SK-N-SH (cell line): ENCODE measurements at regions of chr3 and their contacts with region 1.

Region 1: DNA sequence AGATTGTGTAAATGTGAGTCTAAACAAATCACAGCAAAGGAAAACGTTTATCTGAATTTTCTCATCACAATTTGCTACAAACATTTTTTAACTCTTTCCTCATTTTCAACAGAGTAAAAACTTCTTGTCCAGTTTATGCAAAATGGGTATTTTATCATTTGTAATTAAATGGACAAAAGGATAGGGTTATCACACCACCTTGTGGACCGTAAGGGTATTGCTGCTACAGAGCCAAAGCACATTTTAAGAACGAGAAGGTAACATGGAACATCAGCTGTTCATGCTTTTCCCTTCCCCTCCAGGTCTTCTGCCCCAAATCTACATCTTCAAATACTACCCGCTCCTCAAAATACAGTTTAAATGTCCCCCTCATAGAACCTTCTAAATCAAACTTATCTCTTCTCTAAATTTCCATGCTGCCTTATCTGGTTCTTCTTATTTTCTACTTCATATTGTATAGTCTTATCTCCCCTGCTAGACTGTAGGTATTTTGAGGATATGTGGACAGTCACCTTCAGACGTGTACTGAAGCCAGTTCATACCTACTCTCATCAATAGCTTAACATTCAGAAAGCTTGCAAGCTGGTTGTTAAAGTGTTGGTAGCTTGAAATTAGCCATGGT is 12.8 kb upstream of the SETMAR start:
- DNase-seq: peak; percentile 32
- H3K4me3 ChIP-seq: peak overlapping the region in 1 of 2 experiments; percentile 42; a peak in 1 of 4 replicates
- H3K27ac ChIP-seq: no peak overlapping the region
- H3K4me1 ChIP-seq: no peaks in the 10 kb centered on the region; a peak in 1 of 4 replicates
- H3K27me3 ChIP-seq: no peaks in the 10 kb centered on the region; the same call in 1 of the 2 replicates
- CTCF ChIP-seq: peak; percentile 91
- EP300 ChIP-seq: no peak
- RAD21 ChIP-seq: peak; percentile 86

Region 2: GRCh38 chr3:4071472-4072184 is 218.8 kb before region 1 on chr3:
- CTCF ChIA-PET with region 1: no interaction called
- POLR2A ChIA-PET with region 1: no interaction called
- DNase-seq: no peak
- H3K4me3 ChIP-seq: no peak overlapping the region
- H3K27ac ChIP-seq: no peak overlapping the region
- H3K4me1 ChIP-seq: no peaks in the 10 kb centered on the region
- H3K27me3 ChIP-seq: no peaks in the 10 kb centered on the region
- CTCF ChIP-seq: no peak
- EP300 ChIP-seq: no peak
- RAD21 ChIP-seq: no peak

Region 3: DNA sequence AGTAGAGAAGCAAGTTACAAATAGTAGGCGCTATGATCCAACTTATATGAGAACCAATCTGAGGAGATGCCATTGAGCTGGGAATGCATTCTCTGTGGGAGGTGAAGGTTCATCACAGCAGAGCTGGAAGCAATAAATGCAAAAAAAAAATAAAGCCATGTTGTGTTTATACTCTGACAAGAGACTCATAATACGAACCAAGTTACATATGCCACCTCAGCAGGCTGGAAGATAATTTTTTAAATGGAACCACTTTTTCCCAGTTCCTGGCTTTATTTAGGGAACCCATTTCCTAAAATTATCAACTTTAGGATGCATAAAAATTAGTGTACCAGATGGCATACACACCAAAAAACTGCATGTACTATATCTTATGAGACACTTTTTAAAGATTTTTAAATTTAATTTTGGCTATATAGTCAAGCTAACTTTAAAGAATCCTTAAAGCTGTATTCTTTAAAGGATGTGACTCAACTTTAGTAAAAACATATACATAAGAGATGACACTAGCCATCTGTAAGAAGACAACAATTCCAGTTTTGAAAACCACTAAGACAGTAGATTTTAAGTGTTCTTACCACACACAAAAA is 10.8 kb before region 1 on chr3:
- CTCF ChIA-PET with region 1: interaction called, 21 read pairs
- POLR2A ChIA-PET with region 1: no interaction called
- DNase-seq: no peak
- H3K4me3 ChIP-seq: no peak overlapping the region
- H3K27ac ChIP-seq: no peak overlapping the region
- H3K4me1 ChIP-seq: no peaks in the 10 kb centered on the region
- H3K27me3 ChIP-seq: no peaks in the 10 kb centered on the region
- CTCF ChIP-seq: no peak
- EP300 ChIP-seq: no peak
- RAD21 ChIP-seq: no peak

Region 4: DNA sequence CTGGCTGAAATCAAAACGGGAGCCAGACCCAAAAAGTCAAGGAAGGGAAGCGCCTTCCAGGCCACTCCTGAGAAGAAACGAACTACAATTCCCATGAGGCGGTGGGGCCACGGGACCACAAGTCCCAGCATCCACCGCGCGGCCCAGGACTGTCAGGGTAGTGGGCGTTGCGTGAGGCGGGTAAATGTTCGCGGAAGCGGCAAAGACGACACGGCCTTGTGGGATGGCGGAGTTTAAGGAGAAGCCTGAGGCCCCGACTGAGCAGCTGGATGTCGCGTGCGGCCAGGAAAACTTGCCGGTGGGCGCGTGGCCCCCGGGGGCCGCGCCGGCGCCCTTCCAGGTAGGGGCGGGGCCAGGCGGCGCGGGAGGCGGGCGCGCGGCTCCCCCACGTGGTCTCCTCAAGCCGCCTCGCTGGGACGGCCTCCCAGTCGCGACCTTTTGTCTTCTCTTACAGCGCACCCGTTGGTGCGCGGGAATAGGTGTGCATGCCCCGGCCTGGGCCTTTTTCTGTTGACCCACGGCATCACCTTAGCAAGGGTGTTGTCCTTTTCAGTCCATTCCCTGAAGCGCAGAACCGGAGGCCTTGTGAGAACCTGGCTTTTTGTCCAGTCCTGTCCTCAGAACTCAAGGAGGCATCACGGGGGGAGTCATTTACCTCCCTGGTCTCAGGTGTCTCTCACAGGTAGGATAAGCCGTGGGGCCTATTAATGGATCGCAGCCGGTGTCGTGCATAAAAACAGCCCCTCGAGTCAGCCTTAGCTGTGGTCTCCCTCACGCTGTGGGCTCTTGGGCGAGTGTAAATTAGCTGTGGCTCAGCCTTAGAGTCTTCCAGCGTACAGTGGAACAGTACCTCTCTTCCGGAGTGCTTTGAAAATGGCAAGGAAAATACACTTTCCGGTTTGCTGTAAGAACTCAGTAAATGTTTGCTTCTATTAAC is 13.1 kb after region 1 on chr3 and contains the start of gene SETMAR:
- CTCF ChIA-PET with region 1: interaction called, 15 read pairs
- POLR2A ChIA-PET with region 1: no interaction called
- DNase-seq: peak; percentile 92
- H3K4me3 ChIP-seq: peak within 1 kb of the TSS; percentile 63 to 87
- H3K27ac ChIP-seq: peak within 1 kb of the TSS; percentile 62 to 93
- H3K4me1 ChIP-seq: peaks cover 0 to 7% of the 10 kb centered on the region in 2 experiments; a peak in 2 of 4 replicates
- H3K27me3 ChIP-seq: no peaks in the 10 kb centered on the region
- CTCF ChIP-seq: no peak
- EP300 ChIP-seq: no peak
- RAD21 ChIP-seq: no peak
- polyA plus RNA-seq, gene SETMAR: 10.6 and 13.3 TPM in 2 replicates

Region 5: DNA sequence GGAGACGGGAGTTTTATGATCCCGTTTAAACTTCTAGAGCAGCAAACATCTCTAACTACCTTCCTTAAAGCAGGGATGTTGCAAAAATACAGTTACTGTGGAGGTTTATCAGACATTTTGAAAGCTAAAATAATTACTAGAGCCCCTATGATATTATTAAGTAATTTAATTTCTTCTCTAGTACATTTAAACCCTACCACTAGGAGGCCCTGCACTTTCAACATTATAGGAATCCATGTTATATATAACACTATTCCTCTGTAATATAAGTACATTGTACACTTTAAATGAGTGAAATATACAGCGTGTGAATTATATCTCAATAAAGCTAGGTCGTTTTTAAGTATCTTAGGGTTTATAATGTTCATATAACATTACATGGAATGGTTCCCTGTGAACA is 24.3 kb after region 1 on chr3:
- CTCF ChIA-PET with region 1: no interaction called
- POLR2A ChIA-PET with region 1: no interaction called
- DNase-seq: no peak
- H3K4me3 ChIP-seq: no peak overlapping the region
- H3K27ac ChIP-seq: no peak overlapping the region
- H3K4me1 ChIP-seq: no peaks in the 10 kb centered on the region
- H3K27me3 ChIP-seq: no peaks in the 10 kb centered on the region
- CTCF ChIP-seq: peak; percentile 56
- EP300 ChIP-seq: no peak
- RAD21 ChIP-seq: no peak

Region 6: DNA sequence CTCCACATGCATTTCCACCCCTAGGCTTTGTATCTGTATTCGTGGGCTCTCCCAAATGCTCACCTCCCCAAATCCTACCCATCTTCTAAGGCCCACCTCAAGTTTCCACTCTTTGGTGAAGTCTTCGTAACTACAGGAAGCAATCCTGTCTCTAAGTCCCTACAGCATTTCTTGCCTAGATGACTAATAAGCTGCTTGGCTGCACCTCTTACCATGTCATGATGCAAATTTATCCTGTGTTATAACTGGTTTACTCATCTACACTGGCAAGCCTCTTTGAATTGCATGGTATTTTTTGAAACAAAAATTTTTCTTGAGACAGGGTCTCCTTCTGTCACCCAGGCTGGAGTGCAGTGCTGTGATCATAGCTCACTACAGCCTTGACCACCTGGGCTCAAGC is 86.1 kb after region 1 on chr3:
- CTCF ChIA-PET with region 1: no interaction called
- POLR2A ChIA-PET with region 1: no interaction called
- DNase-seq: no peak
- H3K4me3 ChIP-seq: no peak overlapping the region
- H3K27ac ChIP-seq: no peak overlapping the region
- H3K4me1 ChIP-seq: no peaks in the 10 kb centered on the region
- H3K27me3 ChIP-seq: no peaks in the 10 kb centered on the region
- CTCF ChIP-seq: no peak
- EP300 ChIP-seq: no peak
- RAD21 ChIP-seq: no peak